ENCODE measurements at regions of chr12 and their contacts with region 1.

Region 1: DNA sequence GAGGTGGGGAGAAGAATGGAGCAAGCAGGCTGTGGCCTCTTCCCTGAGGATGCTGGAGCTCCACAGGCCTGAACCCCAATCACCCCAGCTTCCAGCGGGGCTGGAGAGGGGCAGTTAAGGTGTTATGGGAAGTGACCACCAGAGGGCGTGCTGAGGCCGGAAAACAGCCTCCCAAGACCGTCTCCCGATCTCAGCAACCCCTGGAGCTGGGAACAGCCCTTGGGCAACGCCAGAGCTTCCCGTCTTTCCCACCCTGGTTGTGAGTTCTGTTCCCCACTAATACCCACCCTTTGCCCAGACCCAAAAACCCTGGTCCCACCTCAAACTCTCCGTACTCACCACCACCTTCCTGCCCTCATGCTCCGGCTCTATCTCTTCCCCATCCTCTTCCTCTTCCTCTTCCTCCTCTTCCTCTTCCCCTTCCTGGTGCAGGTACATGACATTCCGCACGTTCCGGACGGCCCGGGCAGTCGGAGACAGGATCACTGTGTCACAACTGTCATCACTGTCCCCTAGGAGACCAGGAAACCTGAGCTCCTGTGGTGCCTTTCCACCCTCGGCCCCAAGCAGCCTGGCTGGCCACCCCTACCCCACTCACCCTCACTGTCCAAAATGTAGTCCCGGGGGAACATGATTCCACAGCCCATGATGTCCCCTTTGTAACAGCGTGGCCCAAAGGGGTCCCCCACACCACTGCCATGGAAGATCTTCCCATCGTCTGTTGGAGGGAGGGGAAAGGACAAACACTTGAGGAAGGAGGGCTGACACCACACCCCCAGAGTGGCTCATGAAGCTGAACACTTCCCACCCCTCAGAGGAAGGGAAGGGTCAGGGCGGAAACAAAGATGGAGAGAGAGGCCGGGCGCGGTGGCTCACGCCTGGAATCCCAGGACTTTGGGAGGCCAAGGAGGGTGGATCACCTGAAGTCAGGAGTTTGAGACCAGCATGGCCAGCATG is 12.9 kb downstream of the SPRYD3 start:
- DNase-seq: peak; percentile 80
- ATAC-seq: peak; percentile 66
- H3K4me3 Mint-ChIP-seq: no peak overlapping the region
- H3K27ac Mint-ChIP-seq: peak overlapping the region; percentile 40
- H3K4me1 Mint-ChIP-seq: peaks cover 12% of the 10 kb centered on the region
- H3K27me3 Mint-ChIP-seq: no peaks in the 10 kb centered on the region
- CTCF ChIP-seq: peak; percentile 96

Region 2: GRCh38 chr12:53011887-53012286 is 54.4 kb before region 1 on chr12:
- CTCF ChIA-PET with region 1: no interaction called
- POLR2A ChIA-PET with region 1: no interaction called
- intact Hi-C with region 1: no loop called
- DNase-seq: no peak
- ATAC-seq: no peak
- H3K4me3 Mint-ChIP-seq: peak overlapping the region; percentile 27
- H3K27ac Mint-ChIP-seq: peak overlapping the region; percentile 67
- H3K4me1 Mint-ChIP-seq: peaks cover 63% of the 10 kb centered on the region
- H3K27me3 Mint-ChIP-seq: no peaks in the 10 kb centered on the region
- CTCF ChIP-seq: no peak

Region 3: GRCh38 chr12:53054112-53054833 is 12.0 kb before region 1 on chr12:
- CTCF ChIA-PET with region 1: interaction called, 93 read pairs
- POLR2A ChIA-PET with region 1: interaction called, 5 read pairs
- intact Hi-C with region 1: no loop called
- DNase-seq: peak; percentile 97
- ATAC-seq: peak; percentile 96
- H3K4me3 Mint-ChIP-seq: peak overlapping the region; percentile 91
- H3K27ac Mint-ChIP-seq: peak overlapping the region; percentile 90
- H3K4me1 Mint-ChIP-seq: peaks cover 10% of the 10 kb centered on the region
- H3K27me3 Mint-ChIP-seq: no peaks in the 10 kb centered on the region
- CTCF ChIP-seq: no peak

Region 4: GRCh38 chr12:53098982-53099651 is 32.9 kb after region 1 on chr12:
- CTCF ChIA-PET with region 1: interaction called, 553 read pairs
- POLR2A ChIA-PET with region 1: interaction called, 32 read pairs
- intact Hi-C with region 1: loop called (anchors 2 kb)
- DNase-seq: peak; percentile 97
- ATAC-seq: peak; percentile 52
- H3K4me3 Mint-ChIP-seq: peak overlapping the region; percentile 69
- H3K27ac Mint-ChIP-seq: peak overlapping the region; percentile 86
- H3K4me1 Mint-ChIP-seq: peaks cover 51% of the 10 kb centered on the region
- H3K27me3 Mint-ChIP-seq: peaks cover 2% of the 10 kb centered on the region
- CTCF ChIP-seq: peak; percentile 93

Region 5: GRCh38 chr12:53180220-53180930 is 114.1 kb after region 1 on chr12 and contains the starts of genes CSAD and ZNF740:
- CTCF ChIA-PET with region 1: interaction called, 13 read pairs
- POLR2A ChIA-PET with region 1: interaction called, 6 read pairs
- intact Hi-C with region 1: no loop called
- DNase-seq: peak; percentile 99
- ATAC-seq: peak; percentile 95
- H3K4me3 Mint-ChIP-seq: peak within 1 kb of the TSS; percentile 89
- H3K27ac Mint-ChIP-seq: peak within 1 kb of the TSS; percentile 96
- H3K4me1 Mint-ChIP-seq: peaks cover 51% of the 10 kb centered on the region
- H3K27me3 Mint-ChIP-seq: no peaks in the 10 kb centered on the region
- CTCF ChIP-seq: no peak
- total RNA-seq, gene CSAD: 13.8 to 18.6 TPM
- total RNA-seq, gene ZNF740: 31.3 to 35.9 TPM

Region 6: DNA sequence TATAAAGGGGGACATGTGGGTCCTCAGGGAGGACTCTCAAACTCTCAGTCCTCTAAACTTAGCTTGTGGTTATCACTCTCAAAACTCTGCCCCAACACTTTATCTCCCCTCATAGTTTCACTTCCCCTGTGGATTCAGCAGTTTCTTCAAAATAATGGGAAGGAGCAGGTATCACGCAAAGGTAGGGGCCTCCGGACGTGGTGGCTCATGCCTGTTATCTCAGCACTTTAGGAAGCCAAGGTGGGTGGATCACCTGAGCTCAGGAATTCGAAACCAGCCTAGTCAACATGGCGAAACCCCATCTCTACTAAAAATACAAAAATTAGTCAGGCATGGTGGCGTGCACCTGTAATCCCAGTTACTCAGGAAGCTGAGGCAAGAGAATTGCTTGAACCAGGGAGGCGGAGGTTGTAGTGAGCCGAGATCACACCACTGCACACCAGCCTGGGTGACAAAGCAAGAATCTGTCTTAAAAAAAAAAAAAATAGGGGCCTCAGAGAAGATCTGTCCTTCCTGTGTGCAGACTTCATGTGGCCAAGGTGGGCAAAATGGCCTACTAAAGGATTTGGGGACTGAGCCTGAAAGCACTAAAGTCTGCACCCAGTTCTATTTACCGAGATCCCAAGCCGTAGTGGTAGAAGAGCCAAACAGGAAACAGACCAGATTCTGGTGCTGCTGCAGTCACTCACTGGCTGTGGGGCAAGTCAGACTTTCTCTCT is 134.4 kb after region 1 on chr12:
- CTCF ChIA-PET with region 1: interaction called, 22 read pairs
- POLR2A ChIA-PET with region 1: no interaction called
- intact Hi-C with region 1: no loop called
- DNase-seq: peak; percentile 64
- ATAC-seq: peak; percentile 41
- H3K4me3 Mint-ChIP-seq: peak overlapping the region; percentile 43
- H3K27ac Mint-ChIP-seq: peak overlapping the region; percentile 83
- H3K4me1 Mint-ChIP-seq: peaks cover 70% of the 10 kb centered on the region
- H3K27me3 Mint-ChIP-seq: no peaks in the 10 kb centered on the region
- CTCF ChIP-seq: no peak